ENCODE measurements at regions of chr3 and their contacts with region 1.

Region 1: DNA sequence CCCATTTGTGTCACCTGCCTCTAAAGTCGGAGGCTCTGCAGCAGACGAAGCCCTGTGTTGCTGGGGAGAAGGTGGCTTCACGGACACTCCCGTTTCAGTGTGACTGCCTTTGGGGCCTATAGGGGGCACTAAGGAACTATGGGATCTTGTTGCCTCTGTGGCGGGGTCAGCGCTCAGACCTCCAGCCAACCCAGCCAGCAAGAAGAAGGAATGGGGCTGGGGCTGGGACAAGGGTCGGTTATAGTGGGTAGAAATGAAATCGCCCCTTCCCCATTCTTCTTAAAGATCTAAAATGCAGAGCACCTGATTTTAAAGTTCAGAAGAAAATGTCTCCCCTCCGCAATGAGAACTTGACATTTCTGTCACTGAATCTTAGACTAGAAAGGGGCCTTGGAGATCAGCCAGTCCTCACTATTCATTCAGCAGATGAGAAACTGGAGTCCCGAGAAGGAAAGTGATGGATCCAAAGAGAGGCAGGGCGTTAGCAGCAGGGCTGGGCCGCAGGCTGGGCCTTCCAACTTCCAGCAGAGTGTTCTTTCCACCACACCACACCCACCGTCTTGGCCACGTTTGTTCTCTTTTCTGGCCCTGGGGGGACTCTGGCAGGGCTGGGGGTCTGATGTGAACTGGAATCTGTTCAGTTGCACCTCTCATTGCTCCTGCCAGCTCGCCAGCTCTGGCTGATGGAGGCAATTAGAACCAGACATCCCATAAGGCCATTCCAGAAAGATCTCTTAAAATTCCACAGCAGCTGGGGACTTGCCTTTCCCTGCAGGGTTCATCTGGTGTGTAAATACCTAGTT is 195.4 kb downstream of the OPA1 start:
- DNase-seq: peak in 1 of 2 experiments; percentile 71
- H3K4me3 ChIP-seq: no peak overlapping the region
- H3K27ac ChIP-seq: no peak overlapping the region
- H3K4me1 ChIP-seq: peaks cover 3 to 12% (median 9%) of the 10 kb centered on the region in 4 experiments
- H3K27me3 ChIP-seq: peaks cover 0 to 6% (median 0%) of the 10 kb centered on the region in 4 experiments; a peak in 2 of 7 replicates
- CTCF ChIP-seq: peak; percentile 85 to 96 (median 87)
- EP300 ChIP-seq: no peak
- POLR2A ChIP-seq: no peak
- RAD21 ChIP-seq: peak; percentile 96 to 99

Region 2: DNA sequence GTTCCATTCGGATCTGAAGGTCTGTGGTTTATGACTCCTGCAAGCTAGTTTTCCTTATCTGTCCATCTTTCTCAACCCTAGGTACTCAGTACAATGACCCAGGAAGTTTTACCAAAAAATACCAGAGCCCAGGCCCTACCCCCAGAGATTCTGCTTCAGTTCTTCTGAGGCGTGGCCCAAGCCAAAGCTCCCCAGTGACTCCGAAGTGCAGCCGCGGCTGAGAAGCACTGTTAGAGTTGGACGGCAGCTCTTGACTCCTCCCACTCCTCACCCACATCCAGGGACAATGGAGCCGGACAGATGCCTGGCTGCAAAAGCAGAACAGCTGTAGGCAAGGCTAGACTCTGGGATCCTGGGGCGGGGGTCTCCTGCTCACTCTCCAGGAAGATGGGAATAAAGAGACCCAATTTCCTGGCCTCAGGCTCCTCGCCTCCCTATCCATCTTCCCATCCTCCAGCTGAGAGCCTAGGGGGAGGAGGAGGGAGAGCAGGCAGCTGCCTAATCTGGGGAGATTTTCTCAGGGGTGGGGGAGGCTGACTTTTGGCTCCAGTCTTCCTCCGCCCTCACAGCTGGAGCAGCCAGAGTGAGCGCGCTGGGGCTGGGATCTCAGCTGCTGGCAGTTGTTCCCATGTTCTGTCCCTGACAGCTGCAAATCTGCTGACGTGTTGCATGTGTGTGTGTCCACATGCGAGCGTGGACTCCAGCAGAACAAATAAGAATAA is 28.4 kb after region 1 on chr3:
- CTCF ChIA-PET with region 1: interaction called, 16 read pairs
- POLR2A ChIA-PET with region 1: interaction called, 3 read pairs
- DNase-seq: peak; percentile 51 to 70
- H3K4me3 ChIP-seq: peak overlapping the region in 1 of 4 experiments; percentile 20; a peak in 3 of 8 replicates
- H3K27ac ChIP-seq: no peak overlapping the region
- H3K4me1 ChIP-seq: peaks cover 49 to 62% (median 50%) of the 10 kb centered on the region in 4 experiments
- H3K27me3 ChIP-seq: no peaks in the 10 kb centered on the region
- CTCF ChIP-seq: no peak
- EP300 ChIP-seq: no peak
- POLR2A ChIP-seq: no peak
- RAD21 ChIP-seq: 0 out of 4 replicates have a peak, but pooled peaks of 1 of the 2 experiments have one; percentile 12